ENCODE measurements at regions of chr1 and their contacts with region 1.

Region 1: DNA sequence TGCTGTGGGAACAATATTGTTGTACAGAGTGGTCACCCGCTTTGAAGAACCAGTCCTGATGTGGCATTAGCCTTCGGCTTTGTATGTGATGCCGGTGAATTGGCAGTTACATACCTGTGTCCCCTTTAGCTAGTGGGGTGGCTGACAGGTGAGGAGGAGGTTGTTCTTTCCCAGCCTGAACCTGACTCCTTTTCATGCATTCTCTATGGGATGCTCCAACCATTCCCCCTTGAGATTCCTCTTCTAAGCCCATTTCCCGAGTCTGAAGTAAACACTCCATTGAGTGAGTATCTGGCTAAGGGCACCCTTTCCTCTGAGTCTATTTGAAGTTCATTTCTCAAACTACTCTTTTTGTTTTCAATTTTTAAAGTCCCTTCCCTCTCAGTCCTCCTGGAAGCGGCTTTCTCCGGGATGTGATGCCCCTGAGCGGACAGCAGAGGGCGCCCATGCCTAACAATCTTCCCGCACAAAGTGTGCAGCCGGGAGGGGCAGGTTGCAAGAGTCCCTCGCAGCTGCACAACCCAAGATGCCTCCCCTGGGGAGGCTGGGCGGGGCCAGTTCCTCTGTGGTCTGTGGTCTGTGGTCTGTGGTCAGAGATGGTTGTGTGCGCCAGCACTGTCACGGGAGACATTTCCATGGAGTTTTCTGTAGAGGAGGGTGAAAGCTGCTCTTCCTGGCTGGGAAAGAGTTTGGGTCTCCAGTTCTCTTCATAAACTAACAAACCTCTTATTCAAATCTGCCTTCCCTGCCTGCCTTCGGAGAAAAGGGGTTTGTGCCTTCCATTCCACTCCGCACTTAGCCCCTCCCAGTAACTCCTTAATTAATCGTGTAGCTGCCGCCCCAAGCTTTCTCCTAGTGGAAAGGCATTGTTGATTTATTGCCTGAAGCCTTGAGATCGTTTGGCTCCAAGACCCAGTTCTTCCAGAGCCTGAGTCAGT is 36.4 kb upstream of the LMX1A start:
- DNase-seq: peak; percentile 78 to 94 (median 91)
- ATAC-seq: peak; percentile 100
- H3K4me3 ChIP-seq: peak overlapping the region; percentile 28
- H3K4me3 Mint-ChIP-seq: peak overlapping the region; percentile 59 to 84 (median 75)
- H3K27ac ChIP-seq: no peak overlapping the region
- H3K27ac Mint-ChIP-seq: peak overlapping the region; percentile 45 to 94 (median 90)
- H3K4me1 ChIP-seq: peaks cover 13 to 14% of the 10 kb centered on the region in 2 donors
- H3K4me1 Mint-ChIP-seq: peaks cover 17 to 35% (median 26%) of the 10 kb centered on the region in 7 donors
- H3K27me3 ChIP-seq: peaks cover 7 to 21% of the 10 kb centered on the region in 2 donors
- H3K27me3 Mint-ChIP-seq: peaks cover 59 to 93% (median 80%) of the 10 kb centered on the region in 5 donors

Region 2: DNA sequence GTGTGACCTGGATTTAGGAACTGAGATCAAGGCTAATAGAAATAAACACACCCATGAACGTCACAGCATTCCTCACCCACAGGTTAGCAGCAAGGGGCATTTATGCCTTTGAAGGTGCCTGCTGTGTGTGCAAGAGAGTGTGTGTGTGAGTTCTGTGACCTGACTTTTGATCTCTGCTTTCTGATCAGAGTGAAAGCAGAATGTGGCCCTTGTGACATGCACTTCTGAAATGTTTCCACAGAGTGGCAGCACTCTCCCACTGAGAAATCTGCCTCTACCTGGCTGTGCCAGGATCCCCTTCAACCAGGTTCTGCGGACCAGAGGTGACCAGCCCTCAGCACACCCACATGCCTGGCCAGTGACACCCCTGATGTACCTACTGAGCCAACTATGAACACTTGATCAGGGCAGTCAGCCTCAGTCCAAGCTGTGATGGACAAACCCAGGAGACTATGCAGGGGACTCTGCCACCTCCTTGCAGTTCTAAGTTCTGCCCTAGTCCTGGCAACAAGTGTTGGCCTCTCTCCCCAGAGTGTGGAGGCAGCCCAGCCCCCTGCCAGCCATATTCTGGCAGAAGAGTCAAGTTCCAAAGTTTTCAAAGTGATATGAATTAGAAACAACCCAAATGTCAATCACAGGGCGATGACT is 11.1 kb after region 1 on chr1:
- CTCF ChIA-PET with region 1: interaction called, 7 read pairs
- POLR2A ChIA-PET with region 1: no interaction called
- intact Hi-C with region 1: loop called (anchors 1 kb)
- DNase-seq: peak in 4 of 9 donors; percentile 25 to 36 (median 30)
- ATAC-seq: peak; percentile 62
- H3K4me3 ChIP-seq: no peak overlapping the region
- H3K4me3 Mint-ChIP-seq: peak overlapping the region in 1 of 10 donors; percentile 14
- H3K27ac ChIP-seq: no peak overlapping the region
- H3K27ac Mint-ChIP-seq: no peak overlapping the region
- H3K4me1 ChIP-seq: no peaks in the 10 kb centered on the region
- H3K4me1 Mint-ChIP-seq: peaks cover 0 to 4% (median 0%) of the 10 kb centered on the region in 7 donors
- H3K27me3 ChIP-seq: no peaks in the 10 kb centered on the region
- H3K27me3 Mint-ChIP-seq: peaks cover 30 to 41% (median 34%) of the 10 kb centered on the region in 5 donors

Region 3: GRCh38 chr1:165630629-165631341 is 237.9 kb after region 1 on chr1 and contains the start of gene MGST3:
- CTCF ChIA-PET with region 1: no interaction called
- POLR2A ChIA-PET with region 1: no interaction called
- intact Hi-C with region 1: loop called in 1 of 2 experiments (anchors 1 kb)
- DNase-seq: peak; percentile 91 to 96 (median 93)
- ATAC-seq: peak; percentile 98
- H3K4me3 ChIP-seq: peak within 1 kb of the TSS; percentile 91
- H3K4me3 Mint-ChIP-seq: no peak within 1 kb of the TSS
- H3K27ac ChIP-seq: peak within 1 kb of the TSS; percentile 78
- H3K27ac Mint-ChIP-seq: peak within 1 kb of the TSS in 1 of 9 donors; percentile 89
- H3K4me1 ChIP-seq: peaks cover 16 to 18% of the 10 kb centered on the region in 2 donors
- H3K4me1 Mint-ChIP-seq: peaks cover 5 to 27% (median 20%) of the 10 kb centered on the region in 7 donors
- H3K27me3 ChIP-seq: no peaks in the 10 kb centered on the region
- H3K27me3 Mint-ChIP-seq: peaks cover 0 to 16% (median 0%) of the 10 kb centered on the region in 5 donors
- total RNA-seq, gene MGST3: 21.4 to 59.4 (median 48.3) TPM

Region 4: GRCh38 chr1:165871311-165872067 is 478.6 kb after region 1 on chr1:
- CTCF ChIA-PET with region 1: no interaction called
- POLR2A ChIA-PET with region 1: no interaction called
- intact Hi-C with region 1: loop called in 1 of 2 experiments (anchors 1 kb)
- DNase-seq: peak in 8 of 9 donors; percentile 10 to 57 (median 52)
- ATAC-seq: peak; percentile 89
- H3K4me3 ChIP-seq: peak overlapping the region; percentile 26
- H3K4me3 Mint-ChIP-seq: peak overlapping the region; percentile 54 to 86 (median 64)
- H3K27ac ChIP-seq: no peak overlapping the region
- H3K27ac Mint-ChIP-seq: peak overlapping the region in 8 of 9 donors; percentile 11 to 83 (median 31)
- H3K4me1 ChIP-seq: peaks cover 18 to 28% of the 10 kb centered on the region in 2 donors
- H3K4me1 Mint-ChIP-seq: peaks cover 23 to 60% (median 54%) of the 10 kb centered on the region in 7 donors
- H3K27me3 ChIP-seq: no peaks in the 10 kb centered on the region
- H3K27me3 Mint-ChIP-seq: peaks cover 0 to 11% (median 0%) of the 10 kb centered on the region in 5 donors

Region 5: GRCh38 chr1:166080967-166081870 is 688.3 kb after region 1 on chr1:
- CTCF ChIA-PET with region 1: no interaction called
- POLR2A ChIA-PET with region 1: no interaction called
- intact Hi-C with region 1: no loop called
- DNase-seq: no peak
- ATAC-seq: no peak
- H3K4me3 ChIP-seq: no peak overlapping the region
- H3K4me3 Mint-ChIP-seq: peak overlapping the region in 8 of 10 donors; percentile 17 to 66 (median 46)
- H3K27ac ChIP-seq: no peak overlapping the region
- H3K27ac Mint-ChIP-seq: peak overlapping the region in 2 of 9 donors; percentile 17 to 29
- H3K4me1 ChIP-seq: peaks cover 5% of the 10 kb centered on the region in 2 donors
- H3K4me1 Mint-ChIP-seq: peaks cover 4 to 30% (median 26%) of the 10 kb centered on the region in 7 donors
- H3K27me3 ChIP-seq: no peaks in the 10 kb centered on the region
- H3K27me3 Mint-ChIP-seq: peaks cover 0 to 8% (median 0%) of the 10 kb centered on the region in 5 donors

Region 6: GRCh38 chr1:166479052-166479631 is 1086.2 kb after region 1 on chr1:
- CTCF ChIA-PET with region 1: no interaction called
- POLR2A ChIA-PET with region 1: no interaction called
- intact Hi-C with region 1: loop called in 1 of 2 experiments (anchors 1 kb)
- DNase-seq: peak in 7 of 9 donors; percentile 17 to 41 (median 29)
- ATAC-seq: peak; percentile 62
- H3K4me3 ChIP-seq: no peak overlapping the region
- H3K4me3 Mint-ChIP-seq: no peak overlapping the region
- H3K27ac ChIP-seq: no peak overlapping the region
- H3K27ac Mint-ChIP-seq: no peak overlapping the region
- H3K4me1 ChIP-seq: no peaks in the 10 kb centered on the region
- H3K4me1 Mint-ChIP-seq: peaks cover 0 to 3% (median 0%) of the 10 kb centered on the region in 7 donors
- H3K27me3 ChIP-seq: no peaks in the 10 kb centered on the region
- H3K27me3 Mint-ChIP-seq: peaks cover 0 to 6% (median 0%) of the 10 kb centered on the region in 5 donors

Measured in naive thymus-derived CD4-positive, alpha-beta T cell (primary cell).